IMR-90 (cell line): ENCODE measurements at regions of chr1 and their contacts with region 1.

Region 1: GRCh38 chr1:91165033-91165654 is 143.3 kb upstream of the ZNF644 start:
- DNase-seq: peak; percentile 45
- ATAC-seq: peak; percentile 93
- H3K4me3 ChIP-seq: no peak overlapping the region
- H3K27ac ChIP-seq: no peak overlapping the region
- H3K4me1 ChIP-seq: no peaks in the 10 kb centered on the region
- H3K27me3 ChIP-seq: no peaks in the 10 kb centered on the region; the same call in 1 of the 2 replicates
- CTCF ChIP-seq: peak; percentile 88
- POLR2A ChIP-seq: no peak
- RAD21 ChIP-seq: peak; percentile 74

Region 2: DNA sequence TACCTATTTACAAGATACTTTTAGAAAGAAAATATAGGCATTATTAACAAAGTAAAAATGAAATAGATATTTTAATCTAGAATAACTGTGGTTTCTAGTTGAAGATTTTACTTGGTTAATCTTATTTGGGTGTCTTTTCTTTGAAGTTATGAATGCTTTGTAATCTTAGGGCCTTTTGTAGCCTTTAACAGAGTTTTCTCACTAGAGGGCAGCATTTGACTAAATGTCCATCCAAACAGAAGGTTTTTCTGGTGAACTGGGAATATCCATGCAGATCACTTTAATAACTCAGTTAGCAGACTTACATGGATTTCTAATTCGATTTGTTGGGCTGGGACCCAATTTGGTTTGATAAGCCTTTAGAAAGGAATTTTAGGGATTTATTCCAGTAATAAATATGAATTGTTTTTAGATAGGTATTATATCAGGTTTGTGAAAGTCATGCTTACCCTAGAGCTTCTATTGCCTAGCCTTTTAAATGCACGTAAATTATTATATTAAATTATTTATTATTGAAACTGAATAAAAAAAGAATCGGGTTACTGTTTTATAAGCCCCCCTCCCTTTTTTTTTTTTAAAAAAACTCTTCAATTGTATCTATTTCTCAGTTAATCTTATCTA is 1050.5 kb before region 1 on chr1:
- CTCF ChIA-PET with region 1: no interaction called
- POLR2A ChIA-PET with region 1: no interaction called
- dilution Hi-C with region 1: no loop called
- in situ Hi-C with region 1: no loop called
- intact Hi-C with region 1: loop called (anchors 10 kb)
- DNase-seq: peak; percentile 49
- ATAC-seq: peak; percentile 53; the same call in 1 of the 2 replicates
- H3K4me3 ChIP-seq: no peak overlapping the region
- H3K27ac ChIP-seq: no peak overlapping the region
- H3K4me1 ChIP-seq: no peaks in the 10 kb centered on the region
- H3K27me3 ChIP-seq: no peaks in the 10 kb centered on the region
- CTCF ChIP-seq: peak; percentile 70
- POLR2A ChIP-seq: no peak
- RAD21 ChIP-seq: peak; percentile 63

Region 3: GRCh38 chr1:90721210-90722194 is 443.6 kb before region 1 on chr1:
- CTCF ChIA-PET with region 1: interaction called, 3 read pairs
- POLR2A ChIA-PET with region 1: no interaction called
- dilution Hi-C with region 1: no loop called
- in situ Hi-C with region 1: loop called (anchors 10 kb)
- intact Hi-C with region 1: loop called (anchors 1 kb)
- DNase-seq: peak; percentile 41
- ATAC-seq: peak; percentile 69
- H3K4me3 ChIP-seq: no peak overlapping the region
- H3K27ac ChIP-seq: no peak overlapping the region
- H3K4me1 ChIP-seq: no peaks in the 10 kb centered on the region
- H3K27me3 ChIP-seq: peaks cover 85% of the 10 kb centered on the region
- CTCF ChIP-seq: peak; percentile 78
- POLR2A ChIP-seq: no peak
- RAD21 ChIP-seq: peak; percentile 70

Region 4: DNA sequence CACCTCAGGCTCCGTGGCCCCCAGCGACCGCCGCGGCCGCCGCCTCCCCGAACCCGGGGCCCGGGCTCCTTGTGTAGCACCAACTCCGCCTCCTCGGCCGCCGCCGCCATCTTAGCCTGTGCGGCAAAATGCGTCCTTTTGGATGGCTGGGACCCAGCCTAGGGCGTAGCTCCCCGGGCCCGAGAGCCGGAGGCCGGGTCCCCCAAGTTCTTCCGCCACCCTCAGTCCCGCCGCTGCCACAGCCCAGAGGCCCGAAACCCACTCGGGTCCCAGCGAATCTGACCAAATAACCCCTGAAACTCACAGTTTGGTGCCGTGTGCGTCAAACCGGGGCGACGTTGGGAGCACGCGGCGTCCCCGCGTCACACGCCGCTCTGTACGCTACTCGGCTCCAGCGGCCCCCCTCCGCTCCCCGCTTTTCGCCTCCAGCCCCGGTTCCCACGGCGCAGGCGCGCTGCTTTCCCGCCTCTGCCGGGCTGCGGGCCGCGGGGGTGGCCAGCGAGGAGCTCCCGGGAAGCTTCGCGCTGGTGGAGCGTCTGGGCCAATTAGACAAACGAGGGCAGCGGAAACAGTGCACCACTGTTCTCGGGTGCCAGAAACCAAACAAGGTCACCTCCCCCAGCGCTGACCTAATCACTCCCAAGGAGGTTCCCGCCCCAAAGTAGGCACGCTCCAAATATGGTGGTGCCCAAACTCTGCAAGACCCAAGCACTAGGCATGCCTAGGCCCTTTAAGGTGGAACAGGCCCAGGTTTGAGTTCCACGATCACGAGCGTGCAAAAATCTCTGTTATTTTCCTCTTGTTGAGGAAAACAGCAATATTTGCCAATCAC is 143.2 kb before region 1 on chr1 and contains the start of gene ZNF644:
- CTCF ChIA-PET with region 1: no interaction called
- POLR2A ChIA-PET with region 1: no interaction called
- dilution Hi-C with region 1: no loop called
- in situ Hi-C with region 1: no loop called
- intact Hi-C with region 1: loop called (anchors 5 kb)
- DNase-seq: peak; percentile 84
- ATAC-seq: peak; percentile 86
- H3K4me3 ChIP-seq: peak within 1 kb of the TSS; percentile 65
- H3K27ac ChIP-seq: peak within 1 kb of the TSS; percentile 87
- H3K4me1 ChIP-seq: no peaks in the 10 kb centered on the region
- H3K27me3 ChIP-seq: no peaks in the 10 kb centered on the region
- CTCF ChIP-seq: no peak
- POLR2A ChIP-seq: peak; percentile 91
- RAD21 ChIP-seq: no peak
- total RNA-seq, gene ZNF644: 45.3 and 66.7 TPM in 2 replicates

Region 5: GRCh38 chr1:91099746-91100621 is 65.2 kb before region 1 on chr1:
- CTCF ChIA-PET with region 1: no interaction called
- POLR2A ChIA-PET with region 1: no interaction called
- dilution Hi-C with region 1: no loop called
- in situ Hi-C with region 1: no loop called
- intact Hi-C with region 1: no loop called
- DNase-seq: no peak
- ATAC-seq: no peak
- H3K4me3 ChIP-seq: no peak overlapping the region
- H3K27ac ChIP-seq: no peak overlapping the region
- H3K4me1 ChIP-seq: no peaks in the 10 kb centered on the region
- H3K27me3 ChIP-seq: no peaks in the 10 kb centered on the region
- CTCF ChIP-seq: no peak
- POLR2A ChIP-seq: no peak
- RAD21 ChIP-seq: no peak

Region 6: GRCh38 chr1:91227576-91227975 is 62.4 kb after region 1 on chr1:
- CTCF ChIA-PET with region 1: no interaction called
- POLR2A ChIA-PET with region 1: no interaction called
- dilution Hi-C with region 1: no loop called
- in situ Hi-C with region 1: no loop called
- intact Hi-C with region 1: no loop called
- DNase-seq: no peak
- ATAC-seq: no peak
- H3K4me3 ChIP-seq: no peak overlapping the region
- H3K27ac ChIP-seq: no peak overlapping the region
- H3K4me1 ChIP-seq: no peaks in the 10 kb centered on the region
- H3K27me3 ChIP-seq: no peaks in the 10 kb centered on the region
- CTCF ChIP-seq: no peak
- POLR2A ChIP-seq: no peak
- RAD21 ChIP-seq: no peak

Region 7: GRCh38 chr1:91282695-91283420 is 117.7 kb after region 1 on chr1:
- CTCF ChIA-PET with region 1: interaction called, 9 read pairs
- POLR2A ChIA-PET with region 1: no interaction called
- dilution Hi-C with region 1: no loop called
- in situ Hi-C with region 1: no loop called
- intact Hi-C with region 1: loop called (anchors 1 kb)
- DNase-seq: peak; percentile 73
- ATAC-seq: peak; percentile 91
- H3K4me3 ChIP-seq: no peak overlapping the region
- H3K27ac ChIP-seq: no peak overlapping the region
- H3K4me1 ChIP-seq: no peaks in the 10 kb centered on the region
- H3K27me3 ChIP-seq: no peaks in the 10 kb centered on the region; the same call in 1 of the 2 replicates
- CTCF ChIP-seq: peak; percentile 80
- POLR2A ChIP-seq: no peak
- RAD21 ChIP-seq: peak; percentile 80

Region 8: DNA sequence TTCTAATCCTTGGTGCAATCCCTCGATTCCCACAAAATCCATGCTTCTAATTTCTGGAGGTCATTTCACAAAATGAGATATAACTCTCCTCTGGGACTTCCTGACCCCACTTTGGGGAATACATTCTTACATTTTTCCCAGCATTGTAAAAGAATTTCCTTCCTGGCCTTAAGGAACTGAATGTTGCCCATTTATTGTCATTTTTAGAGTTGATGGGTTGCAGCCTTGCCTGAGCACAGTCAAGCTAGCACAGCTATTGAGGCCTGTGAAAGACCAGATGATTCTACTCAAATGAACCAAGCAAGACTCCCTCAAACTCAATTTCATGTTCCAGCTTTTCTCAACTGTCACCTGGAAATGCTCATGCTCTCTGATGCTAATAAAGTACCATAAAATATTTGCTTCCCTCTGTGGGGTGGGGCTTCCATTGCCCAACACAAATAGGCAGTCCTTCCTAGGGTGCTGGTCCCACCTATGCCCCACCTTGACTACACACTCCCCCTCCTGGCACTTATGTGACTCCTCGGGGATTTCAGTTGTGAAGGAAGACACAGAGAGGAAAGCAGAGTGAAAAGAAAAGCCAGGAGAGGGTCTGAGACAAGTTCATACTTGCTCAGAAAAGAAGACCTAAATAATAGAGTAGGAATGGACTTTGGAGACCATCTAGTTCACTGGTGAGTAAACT is 311.5 kb after region 1 on chr1:
- CTCF ChIA-PET with region 1: no interaction called
- POLR2A ChIA-PET with region 1: no interaction called
- dilution Hi-C with region 1: no loop called
- in situ Hi-C with region 1: no loop called
- intact Hi-C with region 1: no loop called
- DNase-seq: no peak
- ATAC-seq: no peak
- H3K4me3 ChIP-seq: no peak overlapping the region
- H3K27ac ChIP-seq: no peak overlapping the region
- H3K4me1 ChIP-seq: no peaks in the 10 kb centered on the region
- H3K27me3 ChIP-seq: no peaks in the 10 kb centered on the region; the same call in 1 of the 2 replicates
- CTCF ChIP-seq: no peak
- POLR2A ChIP-seq: no peak
- RAD21 ChIP-seq: no peak

Region 9: GRCh38 chr1:91500756-91501522 is 335.8 kb after region 1 on chr1 and contains the start of gene CDC7:
- CTCF ChIA-PET with region 1: no interaction called
- POLR2A ChIA-PET with region 1: no interaction called
- dilution Hi-C with region 1: no loop called
- in situ Hi-C with region 1: no loop called
- intact Hi-C with region 1: loop called (anchors 5 kb)
- DNase-seq: peak; percentile 87
- ATAC-seq: peak; percentile 92
- H3K4me3 ChIP-seq: peak within 1 kb of the TSS; percentile 59
- H3K27ac ChIP-seq: peak within 1 kb of the TSS; percentile 66
- H3K4me1 ChIP-seq: no peaks in the 10 kb centered on the region; the same call in 1 of the 2 replicates
- H3K27me3 ChIP-seq: no peaks in the 10 kb centered on the region
- CTCF ChIP-seq: peak; percentile 40
- POLR2A ChIP-seq: 0 out of 2 replicates have a peak, but pooled peaks have one; percentile 42
- RAD21 ChIP-seq: peak; percentile 25
- total RNA-seq, gene CDC7: 4.7 and 6.9 TPM in 2 replicates